Transverse colon (tissue), 4 donors: ENCODE measurements at regions of chr14 and their contacts with region 1.

Region 1: GRCh38 chr14:95098984-95099599 is 58.2 kb downstream of the DICER1 start:
- DNase-seq: peak; percentile 63
- H3K4me3 ChIP-seq: no peak overlapping the region
- H3K27ac ChIP-seq: no peak overlapping the region
- H3K4me1 ChIP-seq: peaks cover 0 to 25% (median 0%) of the 10 kb centered on the region in 4 donors
- H3K27me3 ChIP-seq: no peaks in the 10 kb centered on the region
- CTCF ChIP-seq: peak; percentile 64 to 83 (median 70)
- EP300 ChIP-seq: no peak
- POLR2A ChIP-seq: no peak

Region 2: GRCh38 chr14:94998670-94999072 is 100.4 kb before region 1 on chr14:
- in situ Hi-C with region 1: no loop called
- intact Hi-C with region 1: loop called (anchors 5 kb)
- DNase-seq: no peak
- H3K4me3 ChIP-seq: no peak overlapping the region
- H3K27ac ChIP-seq: no peak overlapping the region
- H3K4me1 ChIP-seq: peaks cover 0 to 3% (median 0%) of the 10 kb centered on the region in 4 donors
- H3K27me3 ChIP-seq: peaks cover 7% of the 10 kb centered on the region
- CTCF ChIP-seq: no peak
- EP300 ChIP-seq: no peak
- POLR2A ChIP-seq: no peak